Naive thymus-derived CD8-positive, alpha-beta T cell (primary cell): ENCODE measurements at regions of chr12 and their contacts with region 1.

Region 1: GRCh38 chr12:113232840-113233585 is 11.7 kb downstream of the TPCN1 start:
- DNase-seq: peak; percentile 55 to 87 (median 80)
- ATAC-seq: peak; percentile 96 to 97
- H3K4me3 Mint-ChIP-seq: peak overlapping the region; percentile 73 to 92 (median 90)
- H3K27ac Mint-ChIP-seq: peak overlapping the region; percentile 73 to 96 (median 93)
- H3K4me1 Mint-ChIP-seq: peaks cover 20 to 74% (median 63%) of the 10 kb centered on the region in 4 donors
- H3K27me3 Mint-ChIP-seq: no peaks in the 10 kb centered on the region

Region 2: GRCh38 chr12:113184900-113185773 is 47.9 kb before region 1 on chr12 and contains the starts of genes DDX54 and RITA1:
- POLR2A ChIA-PET with region 1: interaction called, 10 read pairs
- DNase-seq: peak; percentile 78 to 97 (median 87)
- ATAC-seq: peak; percentile 85 to 87
- H3K4me3 Mint-ChIP-seq: peak within 1 kb of the TSS; percentile 90 to 99 (median 95)
- H3K27ac Mint-ChIP-seq: peak within 1 kb of the TSS; percentile 92 to 98 (median 96)
- H3K4me1 Mint-ChIP-seq: peaks cover 19 to 52% (median 39%) of the 10 kb centered on the region in 4 donors
- H3K27me3 Mint-ChIP-seq: no peaks in the 10 kb centered on the region
- polyA plus RNA-seq, gene DDX54: 17.9 to 38.2 (median 24.3) TPM
- polyA plus RNA-seq, gene RITA1: 22.9 to 26.2 (median 24.6) TPM